GM12878 (cell line): ENCODE measurements at regions of chr6 and their contacts with region 1.

Region 1: GRCh38 chr6:24205020-24205492 is 79.0 kb downstream of the NRSN1 start:
- DNase-seq: peak; percentile 24
- ATAC-seq: peak; percentile 72
- H3K4me3 ChIP-seq: no peak overlapping the region
- H3K27ac ChIP-seq: no peak overlapping the region
- H3K4me1 ChIP-seq: no peaks in the 10 kb centered on the region
- H3K27me3 ChIP-seq: no peaks in the 10 kb centered on the region
- CTCF ChIP-seq: peak; percentile 43 to 67 (median 54); a peak in 5 of 6 replicates
- EP300 ChIP-seq: no peak
- POLR2A ChIP-seq: no peak
- RAD21 ChIP-seq: peak; percentile 87

Region 2: DNA sequence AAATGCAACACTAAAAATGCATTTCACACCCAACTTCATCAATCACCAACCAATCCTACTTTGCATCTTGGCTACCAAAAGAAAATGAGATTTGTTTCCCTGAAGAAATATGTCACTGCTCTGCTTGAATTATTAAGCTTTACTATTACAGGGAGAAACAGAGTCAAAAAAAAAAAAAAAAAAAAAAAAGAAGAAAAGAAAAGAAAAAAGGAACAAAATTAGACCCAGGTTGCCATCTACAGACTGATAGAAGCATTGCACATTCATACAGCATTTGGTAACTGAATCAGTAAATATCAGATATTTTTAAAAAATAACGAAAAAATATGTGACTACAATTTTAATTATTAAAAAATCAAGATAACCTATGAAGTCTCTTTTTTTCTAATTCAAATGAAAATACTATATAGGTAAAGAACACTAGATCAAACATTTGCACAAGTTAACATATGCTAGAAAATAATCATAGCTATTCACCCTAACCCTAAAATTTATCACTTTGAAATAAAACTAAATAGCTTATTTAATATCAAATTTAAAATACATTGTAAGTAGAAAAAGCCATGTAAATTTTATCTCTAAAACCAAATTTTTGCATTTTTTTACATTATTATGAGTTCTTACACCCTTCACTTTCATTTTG is 69.5 kb after region 1 on chr6:
- CTCF ChIA-PET with region 1: no interaction called
- POLR2A ChIA-PET with region 1: no interaction called
- RAD21 ChIA-PET with region 1: no interaction called
- SMC1A ChIA-PET with region 1: interaction called, 3 read pairs
- in situ Hi-C with region 1: no loop called
- intact Hi-C with region 1: loop called (anchors 5 kb)
- DNase-seq: no peak
- ATAC-seq: no peak
- H3K4me3 ChIP-seq: no peak overlapping the region
- H3K27ac ChIP-seq: no peak overlapping the region
- H3K4me1 ChIP-seq: no peaks in the 10 kb centered on the region
- H3K27me3 ChIP-seq: no peaks in the 10 kb centered on the region
- CTCF ChIP-seq: peak; percentile 47 to 53 (median 49); a peak in 5 of 6 replicates
- EP300 ChIP-seq: no peak
- POLR2A ChIP-seq: no peak
- RAD21 ChIP-seq: peak; percentile 63